Common myeloid progenitor, CD34-positive (primary cell): ENCODE measurements at regions of chr4 and their contacts with region 1.

Region 1: GRCh38 chr4:145609481-145610427 is 9.4 kb upstream of the MMAA start:
- DNase-seq: peak; percentile 71 to 85 (median 78)
- H3K4me3 ChIP-seq: no peak overlapping the region
- H3K27ac ChIP-seq: no peak overlapping the region
- H3K4me1 ChIP-seq: peaks cover 0 to 8% (median 0%) of the 10 kb centered on the region in 4 experiments
- H3K27me3 ChIP-seq: no peaks in the 10 kb centered on the region

Region 2: GRCh38 chr4:145234091-145234706 is 375.6 kb before region 1 on chr4:
- CTCF ChIA-PET with region 1: interaction called, 15 read pairs
- POLR2A ChIA-PET with region 1: no interaction called
- DNase-seq: peak; percentile 66 to 84 (median 76)
- H3K4me3 ChIP-seq: no peak overlapping the region
- H3K27ac ChIP-seq: no peak overlapping the region
- H3K4me1 ChIP-seq: no peaks in the 10 kb centered on the region
- H3K27me3 ChIP-seq: peaks cover 0 to 2% (median 0%) of the 10 kb centered on the region in 5 experiments